Activated naive CD4-positive, alpha-beta T cell treated with anti-CD3 and anti-CD28 coated beads, Interleukin-2, amount 10 ng/mL, durations not matched to agents 7 days and 5 days (primary cell): ENCODE measurements at regions of chr7 and their contacts with region 1.

Region 1: GRCh38 chr7:26365077-26365900 is 73.6 kb downstream of the SNX10 start:
- DNase-seq: peak; percentile 71
- H3K4me3 Mint-ChIP-seq: no peak overlapping the region
- H3K27ac Mint-ChIP-seq: no peak overlapping the region
- H3K4me1 Mint-ChIP-seq: peaks cover 13% of the 10 kb centered on the region
- H3K27me3 Mint-ChIP-seq: no peaks in the 10 kb centered on the region

Region 2: GRCh38 chr7:25894902-25895791 is 470.1 kb before region 1 on chr7:
- CTCF ChIA-PET with region 1: interaction called, 26 read pairs
- DNase-seq: peak; percentile 75
- H3K4me3 Mint-ChIP-seq: peak overlapping the region; percentile 4
- H3K27ac Mint-ChIP-seq: no peak overlapping the region
- H3K4me1 Mint-ChIP-seq: peaks cover 29% of the 10 kb centered on the region
- H3K27me3 Mint-ChIP-seq: peaks cover 31% of the 10 kb centered on the region

Region 3: DNA sequence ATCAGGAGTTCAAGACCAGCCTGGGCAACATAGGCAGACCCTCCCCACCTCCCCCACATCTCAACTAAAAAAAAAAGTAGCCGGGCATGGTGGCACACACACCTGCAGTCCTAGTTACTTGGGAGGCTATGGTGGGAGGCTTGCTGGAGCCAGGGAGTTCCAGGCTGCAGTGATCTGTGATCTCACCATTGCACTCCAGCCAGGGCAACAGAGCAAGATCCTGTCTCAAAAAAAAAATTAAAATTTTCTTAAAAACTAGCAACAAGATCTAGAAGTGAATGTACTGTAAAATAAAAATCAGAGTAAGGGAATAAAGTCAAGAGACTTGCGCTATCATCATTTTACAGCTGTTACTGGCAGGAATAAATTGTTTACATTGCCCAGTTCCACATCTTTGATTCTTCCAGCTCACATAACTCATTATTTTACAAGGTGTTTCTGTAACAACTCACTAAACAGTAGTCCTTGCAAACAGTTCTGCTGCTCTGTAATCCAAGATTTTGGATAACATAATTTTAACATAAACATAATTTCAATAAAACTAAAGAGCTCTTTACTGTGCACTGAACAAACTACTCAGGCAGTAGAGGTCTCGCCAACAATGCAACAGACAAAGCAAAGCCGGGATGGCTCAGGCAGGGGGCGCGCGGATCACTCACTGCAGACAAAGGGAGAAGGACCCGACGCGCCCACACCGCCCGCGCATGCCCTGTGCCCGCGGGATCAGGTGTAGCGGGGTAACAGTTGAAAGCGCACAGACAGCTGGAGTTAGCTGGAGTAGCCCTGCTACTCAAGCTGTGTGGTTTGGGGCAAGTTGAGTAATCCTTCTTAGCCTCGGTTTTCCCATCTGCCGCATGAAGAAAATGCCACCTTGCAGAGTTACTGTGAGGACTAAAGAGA is 286.6 kb before region 1 on chr7:
- CTCF ChIA-PET with region 1: interaction called, 15 read pairs
- DNase-seq: peak; percentile 86
- H3K4me3 Mint-ChIP-seq: no peak overlapping the region
- H3K27ac Mint-ChIP-seq: no peak overlapping the region
- H3K4me1 Mint-ChIP-seq: peaks cover 7% of the 10 kb centered on the region
- H3K27me3 Mint-ChIP-seq: peaks cover 91% of the 10 kb centered on the region

Region 4: GRCh38 chr7:26200444-26201246 is 164.6 kb before region 1 on chr7 and contains the start of gene HNRNPA2B1:
- CTCF ChIA-PET with region 1: interaction called, 16 read pairs
- DNase-seq: peak; percentile 97
- H3K4me3 Mint-ChIP-seq: peak within 1 kb of the TSS; percentile 99
- H3K27ac Mint-ChIP-seq: peak within 1 kb of the TSS; percentile 100
- H3K4me1 Mint-ChIP-seq: peaks cover 44% of the 10 kb centered on the region
- H3K27me3 Mint-ChIP-seq: peaks cover 15% of the 10 kb centered on the region

Region 5: GRCh38 chr7:26379711-26380110 is 14.4 kb after region 1 on chr7:
- CTCF ChIA-PET with region 1: interaction called, 13 read pairs
- DNase-seq: no peak
- H3K4me3 Mint-ChIP-seq: no peak overlapping the region
- H3K27ac Mint-ChIP-seq: no peak overlapping the region
- H3K4me1 Mint-ChIP-seq: peaks cover 9% of the 10 kb centered on the region
- H3K27me3 Mint-ChIP-seq: peaks cover 51% of the 10 kb centered on the region

Region 6: GRCh38 chr7:26667500-26668133 is 302.3 kb after region 1 on chr7:
- CTCF ChIA-PET with region 1: interaction called, 29 read pairs
- DNase-seq: peak; percentile 74
- H3K4me3 Mint-ChIP-seq: no peak overlapping the region
- H3K27ac Mint-ChIP-seq: no peak overlapping the region
- H3K4me1 Mint-ChIP-seq: peaks cover 15% of the 10 kb centered on the region
- H3K27me3 Mint-ChIP-seq: peaks cover 21% of the 10 kb centered on the region